MCF 10A (cell line): ENCODE measurements at regions of chr7 and their contacts with region 1.

Region 1: DNA sequence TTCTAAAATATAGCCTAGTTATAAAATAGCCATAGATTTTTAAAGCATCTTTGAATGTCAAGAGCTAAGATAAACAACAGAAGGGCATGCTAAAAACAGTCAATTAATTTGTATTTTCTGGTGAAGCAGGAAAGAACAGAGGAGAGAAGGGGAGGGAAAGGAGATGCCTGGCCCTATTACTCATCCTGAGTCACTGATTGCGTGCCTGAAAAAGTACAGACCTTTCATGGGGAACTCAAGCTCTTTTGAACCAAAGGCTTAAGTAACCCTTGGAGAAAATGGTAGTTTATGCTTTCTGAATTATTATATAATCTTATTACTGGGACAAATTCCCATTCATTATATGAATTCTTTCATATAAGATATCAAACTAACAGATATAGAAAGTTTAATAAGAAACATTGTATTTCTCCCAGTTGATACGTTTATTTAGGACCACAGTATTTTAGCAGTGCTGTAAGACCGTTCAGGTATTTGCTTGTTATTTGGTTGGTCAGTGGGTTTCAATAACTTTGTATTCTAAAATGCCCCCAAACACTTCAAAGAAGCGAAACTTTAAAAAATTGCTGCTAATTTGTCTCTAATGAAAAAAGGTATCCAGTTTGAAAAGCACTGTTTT is 151.3 kb downstream of the HGF start:
- DNase-seq: peak; percentile 83
- H3K4me3 Mint-ChIP-seq: no peak overlapping the region
- H3K27ac Mint-ChIP-seq: peak overlapping the region; percentile 62
- H3K4me1 Mint-ChIP-seq: peaks cover 20% of the 10 kb centered on the region
- H3K27me3 Mint-ChIP-seq: no peaks in the 10 kb centered on the region
- CTCF ChIP-seq: no peak

Region 2: GRCh38 chr7:81684513-81685269 is 66.2 kb after region 1 on chr7:
- CTCF ChIA-PET with region 1: no interaction called
- POLR2A ChIA-PET with region 1: interaction called, 7 read pairs
- intact Hi-C with region 1: loop called (anchors 1 kb)
- DNase-seq: peak; percentile 99
- H3K4me3 Mint-ChIP-seq: peak overlapping the region; percentile 30
- H3K27ac Mint-ChIP-seq: peak overlapping the region; percentile 14
- H3K4me1 Mint-ChIP-seq: peaks cover 41% of the 10 kb centered on the region
- H3K27me3 Mint-ChIP-seq: no peaks in the 10 kb centered on the region
- CTCF ChIP-seq: no peak

Region 3: GRCh38 chr7:81791568-81792518 is 173.3 kb after region 1 on chr7:
- CTCF ChIA-PET with region 1: no interaction called
- POLR2A ChIA-PET with region 1: no interaction called
- intact Hi-C with region 1: no loop called
- DNase-seq: no peak
- H3K4me3 Mint-ChIP-seq: no peak overlapping the region
- H3K27ac Mint-ChIP-seq: no peak overlapping the region
- H3K4me1 Mint-ChIP-seq: no peaks in the 10 kb centered on the region
- H3K27me3 Mint-ChIP-seq: peaks cover 97% of the 10 kb centered on the region
- CTCF ChIP-seq: no peak